Activated CD4-positive, alpha-beta T cell treated with anti-CD3 and anti-CD28 coated beads, Interleukin-2, amount 10 ng/mL, durations not matched to agents 24 days and 14 days (primary cell): ENCODE measurements at regions of chr13 and their contacts with region 1.

Region 1: GRCh38 chr13:25901460-25902376 is 150.1 kb downstream of the SHISA2 start:
- DNase-seq: peak; percentile 87
- H3K4me3 Mint-ChIP-seq: peak overlapping the region; percentile 24
- H3K27ac Mint-ChIP-seq: peak overlapping the region; percentile 46
- H3K4me1 Mint-ChIP-seq: peaks cover 24% of the 10 kb centered on the region
- H3K27me3 Mint-ChIP-seq: peaks cover 7% of the 10 kb centered on the region

Region 2: GRCh38 chr13:25762795-25763377 is 138.8 kb before region 1 on chr13:
- intact Hi-C with region 1: loop called (anchors 1 kb)
- DNase-seq: peak; percentile 78
- H3K4me3 Mint-ChIP-seq: peak overlapping the region; percentile 57
- H3K27ac Mint-ChIP-seq: peak overlapping the region; percentile 79
- H3K4me1 Mint-ChIP-seq: peaks cover 29% of the 10 kb centered on the region
- H3K27me3 Mint-ChIP-seq: peaks cover 2% of the 10 kb centered on the region

Region 3: GRCh38 chr13:25847145-25847544 is 54.6 kb before region 1 on chr13:
- intact Hi-C with region 1: loop called (anchors 1 kb)
- DNase-seq: peak; percentile 80
- H3K4me3 Mint-ChIP-seq: peak overlapping the region; percentile 31
- H3K27ac Mint-ChIP-seq: peak overlapping the region; percentile 49
- H3K4me1 Mint-ChIP-seq: peaks cover 41% of the 10 kb centered on the region
- H3K27me3 Mint-ChIP-seq: peaks cover 2% of the 10 kb centered on the region

Region 4: DNA sequence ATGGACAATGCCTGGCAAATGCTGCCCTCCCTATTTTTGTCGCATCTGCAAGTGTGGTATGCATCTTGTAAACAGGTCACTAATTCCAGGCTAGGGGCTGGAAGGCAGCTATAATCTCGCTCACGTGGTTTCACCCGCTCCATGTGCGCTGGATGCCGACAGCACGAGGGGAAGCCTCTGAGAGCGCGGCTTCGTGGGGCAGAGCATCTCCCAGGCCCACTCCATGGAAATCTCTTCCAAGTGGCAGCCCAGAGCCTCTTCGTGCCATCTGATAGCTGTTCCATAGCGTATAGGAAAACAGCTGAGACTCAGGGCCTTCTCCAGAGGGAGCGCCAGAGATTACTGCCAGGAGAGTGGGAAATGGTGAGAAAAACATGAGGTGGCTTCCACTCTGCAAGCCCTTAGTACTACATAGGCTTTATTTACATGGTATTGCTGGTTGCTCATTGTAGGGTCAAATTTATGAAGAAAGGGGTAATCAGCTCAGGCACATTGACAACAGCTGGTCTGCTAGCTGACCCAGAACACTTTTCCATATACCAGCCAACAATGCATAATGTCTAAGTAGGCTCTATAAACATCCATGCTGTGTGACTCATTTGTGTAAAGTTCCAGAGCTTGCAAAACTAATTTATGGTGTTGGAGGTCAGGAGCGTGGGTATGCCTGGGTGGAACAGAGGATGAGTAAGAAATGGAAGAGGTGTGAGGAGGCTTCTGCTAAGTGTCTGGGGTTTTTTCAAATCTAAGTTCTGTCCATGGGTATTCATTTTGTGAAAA is 15.1 kb before region 1 on chr13:
- intact Hi-C with region 1: loop called (anchors 1 kb)
- DNase-seq: no peak
- H3K4me3 Mint-ChIP-seq: no peak overlapping the region
- H3K27ac Mint-ChIP-seq: peak overlapping the region; percentile 35
- H3K4me1 Mint-ChIP-seq: peaks cover 41% of the 10 kb centered on the region
- H3K27me3 Mint-ChIP-seq: no peaks in the 10 kb centered on the region

Region 5: DNA sequence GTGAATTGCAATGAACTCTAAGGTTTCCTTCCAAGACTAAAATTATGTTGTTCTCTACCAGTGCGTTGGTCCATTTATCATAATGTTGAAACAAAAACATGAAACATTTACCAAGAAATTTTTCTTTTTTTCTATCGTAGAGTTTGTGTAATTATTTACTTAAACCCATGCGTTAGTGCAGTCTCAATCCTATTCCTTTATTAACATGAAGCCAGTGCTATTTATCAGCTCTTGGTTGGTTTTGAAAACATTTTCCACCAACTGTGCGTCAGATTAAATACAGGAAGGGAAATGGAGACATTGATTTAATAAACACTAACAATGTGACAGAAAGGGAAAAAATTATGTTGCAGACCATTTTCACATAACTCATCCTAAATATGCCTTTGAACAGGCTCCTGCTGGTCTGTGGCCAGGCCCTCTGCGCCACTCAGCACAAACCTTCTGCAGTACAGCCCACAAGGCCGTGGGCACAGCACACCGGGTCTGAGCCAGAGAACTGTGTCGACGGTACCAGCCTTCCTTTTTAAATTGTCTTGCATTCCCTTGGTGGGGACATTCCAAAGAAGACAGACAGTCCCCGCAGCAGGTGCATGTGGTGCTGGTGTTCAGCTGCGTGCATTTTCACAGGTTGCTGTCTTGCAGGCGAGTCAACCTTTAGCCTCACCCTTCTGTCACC is 14.3 kb after region 1 on chr13:
- intact Hi-C with region 1: no loop called
- DNase-seq: peak; percentile 37
- H3K4me3 Mint-ChIP-seq: no peak overlapping the region
- H3K27ac Mint-ChIP-seq: no peak overlapping the region
- H3K4me1 Mint-ChIP-seq: peaks cover 5% of the 10 kb centered on the region
- H3K27me3 Mint-ChIP-seq: peaks cover 9% of the 10 kb centered on the region

Region 6: DNA sequence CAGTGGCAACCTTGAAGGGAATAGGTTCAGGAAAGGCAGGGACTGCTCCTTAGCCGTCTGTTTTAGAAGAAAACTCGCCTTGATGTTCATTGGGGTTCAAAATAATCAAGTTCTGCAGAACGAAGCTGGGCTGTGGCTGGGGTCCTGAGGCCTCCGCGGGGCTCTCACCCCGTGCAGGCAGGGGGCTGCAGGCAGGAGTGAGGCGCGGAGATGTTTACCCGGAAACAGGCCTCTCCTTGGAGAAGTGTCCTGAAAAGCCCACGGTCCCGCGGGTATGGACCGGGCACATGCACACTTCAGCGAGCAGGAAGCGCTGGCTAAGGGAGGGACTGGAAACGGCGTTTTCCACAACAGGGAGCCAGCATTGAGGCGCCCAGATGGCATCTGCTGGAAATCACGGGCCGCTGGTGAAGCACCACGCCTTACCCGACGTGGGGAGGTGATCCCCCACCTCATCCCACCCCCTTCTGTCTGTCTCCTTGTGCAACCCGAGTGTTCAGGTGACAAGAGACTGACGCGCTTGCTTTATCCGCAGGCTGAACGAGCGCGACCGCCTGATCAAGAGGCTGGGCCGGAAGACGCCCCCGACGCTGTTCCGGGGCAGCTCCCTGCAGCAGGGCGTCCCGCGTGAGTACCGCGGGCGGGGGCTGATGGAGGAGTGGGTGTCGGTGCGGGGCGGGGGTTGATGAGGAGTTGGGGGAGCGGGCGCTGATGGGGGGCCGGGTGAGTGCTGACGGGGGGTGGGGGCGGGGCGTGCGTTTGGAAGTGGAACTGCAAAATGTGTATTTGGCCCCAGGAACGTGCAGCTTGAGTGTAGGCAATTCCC is 110.5 kb after region 1 on chr13:
- intact Hi-C with region 1: loop called (anchors 5 kb)
- DNase-seq: peak; percentile 88
- H3K4me3 Mint-ChIP-seq: peak overlapping the region; percentile 83
- H3K27ac Mint-ChIP-seq: peak overlapping the region; percentile 72
- H3K4me1 Mint-ChIP-seq: peaks cover 16% of the 10 kb centered on the region
- H3K27me3 Mint-ChIP-seq: no peaks in the 10 kb centered on the region